Activated naive CD4-positive, alpha-beta T cell treated with anti-CD3 and anti-CD28 coated beads, Interleukin-2, amount 10 ng/mL, durations not matched to agents 7 days and 5 days (primary cell): ENCODE measurements at regions of chr17 and their contacts with region 1.

Region 1: GRCh38 chr17:63478791-63479494 is 2.1 kb downstream of the ACE start:
- DNase-seq: peak; percentile 88
- H3K4me3 Mint-ChIP-seq: peak overlapping the region; percentile 17
- H3K27ac Mint-ChIP-seq: peak overlapping the region; percentile 21
- H3K4me1 Mint-ChIP-seq: peaks cover 18% of the 10 kb centered on the region
- H3K27me3 Mint-ChIP-seq: peaks cover 81% of the 10 kb centered on the region

Region 2: GRCh38 chr17:63434876-63435684 is 43.9 kb before region 1 on chr17:
- CTCF ChIA-PET with region 1: interaction called, 235 read pairs
- DNase-seq: peak; percentile 77
- H3K4me3 Mint-ChIP-seq: no peak overlapping the region
- H3K27ac Mint-ChIP-seq: peak overlapping the region; percentile 86
- H3K4me1 Mint-ChIP-seq: peaks cover 52% of the 10 kb centered on the region
- H3K27me3 Mint-ChIP-seq: peaks cover 3% of the 10 kb centered on the region

Region 3: DNA sequence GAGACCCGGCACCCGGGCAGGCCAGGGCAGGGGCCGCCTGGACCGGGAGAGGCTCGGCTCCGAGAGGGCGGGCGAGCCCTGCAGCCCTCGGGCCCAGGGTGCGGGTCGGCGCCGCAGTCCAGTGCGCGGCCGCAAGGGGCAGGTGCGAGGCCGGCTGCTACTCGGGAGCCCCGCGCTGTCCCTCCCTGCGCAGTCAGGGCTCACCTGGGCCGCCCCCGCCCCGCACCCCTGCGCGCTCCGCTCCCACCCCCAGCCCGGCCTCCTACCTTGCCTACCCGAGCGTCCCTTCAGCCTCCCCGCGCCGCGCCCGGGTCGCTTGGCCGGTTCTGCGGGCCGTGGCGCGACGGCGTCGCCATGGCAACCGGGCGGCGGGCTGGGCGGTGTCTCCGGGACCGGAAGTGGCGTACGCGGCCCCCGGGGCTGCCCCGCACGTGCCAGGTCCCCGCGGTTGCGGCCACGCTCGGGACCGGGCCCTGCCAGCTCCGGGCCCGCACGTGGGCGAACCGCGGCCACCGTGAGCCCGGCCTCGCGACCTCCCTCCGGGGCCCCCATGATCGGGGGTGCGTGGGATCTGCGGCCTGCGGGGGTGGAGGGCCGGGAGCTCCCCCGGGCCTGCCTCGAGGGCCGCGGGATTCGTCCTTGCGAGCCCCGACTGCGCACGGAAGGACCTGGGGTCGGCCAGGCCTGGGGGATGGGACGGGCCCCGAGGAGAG is 32.8 kb before region 1 on chr17 and contains the start of gene CYB561:
- CTCF ChIA-PET with region 1: interaction called, 18 read pairs
- DNase-seq: peak; percentile 76
- H3K4me3 Mint-ChIP-seq: peak within 1 kb of the TSS; percentile 54
- H3K27ac Mint-ChIP-seq: peak within 1 kb of the TSS; percentile 45
- H3K4me1 Mint-ChIP-seq: peaks cover 36% of the 10 kb centered on the region
- H3K27me3 Mint-ChIP-seq: peaks cover 75% of the 10 kb centered on the region